Panc1 (cell line): ENCODE measurements at regions of chr3 and their contacts with region 1.

Region 1: GRCh38 chr3:136022529-136023263 is 57.2 kb downstream of the PPP2R3A start:
- DNase-seq: no peak
- ATAC-seq: no peak
- H3K4me3 ChIP-seq: no peak overlapping the region
- H3K27ac ChIP-seq: no peak overlapping the region
- H3K4me1 ChIP-seq: no peaks in the 10 kb centered on the region
- H3K27me3 ChIP-seq: no peaks in the 10 kb centered on the region
- CTCF ChIP-seq: no peak

Region 2: GRCh38 chr3:135432402-135432801 is 590.3 kb before region 1 on chr3:
- CTCF ChIA-PET with region 1: no interaction called
- POLR2A ChIA-PET with region 1: no interaction called
- in situ Hi-C with region 1: no loop called
- intact Hi-C with region 1: loop called (anchors 10 kb)
- DNase-seq: no peak
- ATAC-seq: no peak
- H3K4me3 ChIP-seq: no peak overlapping the region
- H3K27ac ChIP-seq: no peak overlapping the region
- H3K4me1 ChIP-seq: no peaks in the 10 kb centered on the region
- H3K27me3 ChIP-seq: no peaks in the 10 kb centered on the region
- CTCF ChIP-seq: no peak